HepG2 (cell line): ENCODE measurements at regions of chr3 and their contacts with region 1.

Region 1: DNA sequence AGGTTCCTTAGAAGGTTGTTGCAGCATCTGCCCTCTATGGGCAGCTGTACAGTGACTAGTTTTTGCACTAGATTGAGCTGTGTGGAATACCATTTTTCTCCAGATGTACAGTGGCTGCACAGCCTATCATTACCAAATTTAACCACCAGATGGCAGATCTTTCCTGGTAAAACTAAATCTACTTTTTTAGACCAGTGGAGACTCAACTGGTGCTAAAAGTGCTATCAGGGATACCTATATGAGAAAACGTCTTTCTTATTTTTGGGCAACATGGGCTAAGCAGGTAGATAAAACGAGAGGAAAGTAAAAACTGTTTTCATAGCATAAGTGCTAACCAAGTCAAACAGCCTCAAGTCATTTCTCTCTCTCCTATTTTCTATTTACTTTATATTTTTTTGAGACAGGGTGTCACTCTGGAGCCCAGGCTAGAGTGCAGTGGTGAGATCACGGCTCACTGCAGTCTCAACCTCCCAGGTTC is 21.2 kb downstream of the IGSF10 start:
- DNase-seq: peak; percentile 49
- ATAC-seq: peak; percentile 96
- H3K4me3 ChIP-seq: no peak overlapping the region
- H3K27ac ChIP-seq: no peak overlapping the region
- H3K4me1 ChIP-seq: no peaks in the 10 kb centered on the region
- H3K27me3 ChIP-seq: 0 out of 5 replicates have a peak, but pooled peaks cover 0 to 3% of the 10 kb centered on the region in 2 experiments
- CTCF ChIP-seq: peak; percentile 74
- EP300 ChIP-seq: no peak
- POLR2A ChIP-seq: no peak
- RAD21 ChIP-seq: peak; percentile 60

Region 2: DNA sequence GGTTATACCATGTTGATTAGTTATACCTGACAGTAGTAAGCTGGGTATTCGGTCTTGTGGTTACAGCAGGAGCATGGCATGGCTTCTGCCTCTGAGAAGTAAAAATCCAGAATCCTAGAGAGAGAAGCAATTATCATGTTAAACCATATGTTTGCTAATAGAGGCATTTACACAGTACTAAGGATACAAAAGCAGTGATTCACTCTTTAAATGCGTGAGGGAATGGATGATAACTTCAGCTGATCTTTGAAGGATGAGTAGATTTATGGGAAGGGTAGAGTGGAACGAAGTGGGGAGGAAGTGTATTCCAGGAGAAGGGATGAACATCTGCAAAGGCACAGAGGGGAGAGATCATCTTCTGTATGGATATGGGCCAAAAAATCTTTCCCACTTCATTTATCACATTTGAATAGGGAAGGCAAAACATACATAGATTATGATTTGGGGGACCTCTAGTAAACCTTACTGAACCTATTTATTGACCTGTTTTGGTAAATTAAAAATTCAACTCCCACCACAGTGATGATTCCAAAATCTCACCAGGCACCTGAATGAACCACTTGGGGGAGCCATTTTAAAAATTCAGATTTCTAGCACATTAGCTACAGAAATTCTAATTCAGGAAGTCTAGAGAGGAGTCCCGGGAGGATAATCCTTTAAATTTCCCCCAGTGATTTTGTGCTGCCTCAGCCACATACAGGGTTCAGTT is 13.9 kb before region 1 on chr3:
- CTCF ChIA-PET with region 1: no interaction called
- POLR2A ChIA-PET with region 1: no interaction called
- in situ Hi-C with region 1: no loop called
- intact Hi-C with region 1: loop called (anchors 1 kb)
- DNase-seq: no peak
- ATAC-seq: no peak
- H3K4me3 ChIP-seq: no peak overlapping the region
- H3K27ac ChIP-seq: no peak overlapping the region
- H3K4me1 ChIP-seq: peaks cover 15% of the 10 kb centered on the region
- H3K27me3 ChIP-seq: no peaks in the 10 kb centered on the region; a peak in 1 of 5 replicates
- CTCF ChIP-seq: no peak
- EP300 ChIP-seq: no peak
- POLR2A ChIP-seq: no peak
- RAD21 ChIP-seq: no peak

Region 3: GRCh38 chr3:151468284-151468917 is 28.7 kb after region 1 on chr3:
- CTCF ChIA-PET with region 1: interaction called, 4 read pairs
- POLR2A ChIA-PET with region 1: no interaction called
- in situ Hi-C with region 1: no loop called
- intact Hi-C with region 1: loop called (anchors 2 kb)
- DNase-seq: peak; percentile 63
- ATAC-seq: peak; percentile 95
- H3K4me3 ChIP-seq: no peak overlapping the region
- H3K27ac ChIP-seq: no peak overlapping the region
- H3K4me1 ChIP-seq: no peaks in the 10 kb centered on the region
- H3K27me3 ChIP-seq: peaks cover 0 to 4% of the 10 kb centered on the region in 2 experiments; a peak in 1 of 5 replicates
- CTCF ChIP-seq: peak; percentile 77
- EP300 ChIP-seq: no peak
- POLR2A ChIP-seq: no peak
- RAD21 ChIP-seq: 0 out of 2 replicates have a peak, but pooled peaks have one; percentile 28

Region 4: GRCh38 chr3:151501923-151502632 is 62.4 kb after region 1 on chr3:
- CTCF ChIA-PET with region 1: no interaction called
- POLR2A ChIA-PET with region 1: no interaction called
- in situ Hi-C with region 1: no loop called
- intact Hi-C with region 1: no loop called
- DNase-seq: no peak
- ATAC-seq: no peak
- H3K4me3 ChIP-seq: no peak overlapping the region
- H3K27ac ChIP-seq: no peak overlapping the region
- H3K4me1 ChIP-seq: no peaks in the 10 kb centered on the region
- H3K27me3 ChIP-seq: no peaks in the 10 kb centered on the region
- CTCF ChIP-seq: no peak
- EP300 ChIP-seq: no peak
- POLR2A ChIP-seq: no peak
- RAD21 ChIP-seq: no peak

Region 5: DNA sequence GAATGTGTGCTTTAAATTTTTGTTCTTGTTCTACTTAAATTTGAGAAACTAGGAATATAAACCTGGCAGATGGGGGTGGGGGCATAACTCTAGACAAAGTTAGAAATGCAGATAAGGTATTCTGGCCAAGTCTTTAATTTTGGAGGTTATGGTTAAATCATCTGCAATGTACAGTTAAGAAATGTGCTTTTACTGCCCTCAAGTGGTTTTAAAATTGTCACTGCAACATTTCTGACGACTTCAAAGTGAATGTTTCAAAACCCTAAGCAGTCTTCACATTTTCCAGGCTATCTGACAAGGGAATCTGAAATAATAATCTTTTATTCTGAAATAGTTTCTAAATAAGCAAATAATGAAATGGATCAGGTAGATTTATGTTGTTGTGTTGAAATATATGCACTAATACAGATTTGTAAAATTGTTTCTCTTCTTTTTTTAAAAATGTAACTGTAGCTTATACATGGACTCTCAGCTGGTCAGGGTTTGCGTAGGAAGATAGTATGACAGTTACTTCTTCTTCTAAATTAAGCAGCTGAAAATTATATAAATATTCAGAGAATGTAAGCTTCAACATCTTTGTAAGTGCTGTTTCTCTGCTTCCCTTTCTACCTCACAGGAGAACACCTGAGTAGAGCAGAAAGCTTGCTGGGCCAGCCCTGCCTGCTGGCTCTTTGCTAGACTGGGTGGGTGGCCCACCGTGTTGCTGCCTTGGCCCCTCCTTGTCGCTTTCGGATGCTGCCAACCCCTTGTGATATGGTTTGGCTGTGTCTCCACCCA is 478.8 kb after region 1 on chr3:
- CTCF ChIA-PET with region 1: interaction called, 18 read pairs
- POLR2A ChIA-PET with region 1: no interaction called
- in situ Hi-C with region 1: no loop called
- intact Hi-C with region 1: loop called (anchors 1 kb)
- DNase-seq: peak; percentile 34
- ATAC-seq: peak; percentile 54; the same call in 2 of the 3 replicates
- H3K4me3 ChIP-seq: no peak overlapping the region
- H3K27ac ChIP-seq: no peak overlapping the region
- H3K4me1 ChIP-seq: no peaks in the 10 kb centered on the region
- H3K27me3 ChIP-seq: no peaks in the 10 kb centered on the region
- CTCF ChIP-seq: peak; percentile 60
- EP300 ChIP-seq: no peak
- POLR2A ChIP-seq: no peak
- RAD21 ChIP-seq: no peak